ENCODE measurements at regions of chr14 and their contacts with region 1.

Region 1: DNA sequence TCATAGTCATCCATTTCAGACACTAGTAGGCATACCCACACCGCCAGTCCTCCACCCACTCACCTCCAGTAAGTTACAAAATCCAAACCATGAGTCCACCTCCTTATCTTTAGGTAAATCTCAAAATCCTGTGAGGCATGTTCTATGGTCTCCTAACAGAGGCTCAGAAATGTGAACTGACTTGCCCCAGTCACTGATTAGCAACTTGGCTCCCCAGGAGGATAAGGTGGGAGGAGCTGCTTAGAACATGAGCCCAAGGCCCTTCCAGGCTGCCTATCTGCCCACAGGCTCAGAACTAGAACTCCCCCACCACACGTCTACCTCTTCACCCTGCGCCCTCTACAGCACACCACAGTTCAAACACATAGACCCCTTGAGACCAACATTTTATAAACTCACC is 19.9 kb downstream of the SETD3 start:
- DNase-seq: peak in 1 of 2 experiments; percentile 45
- H3K4me3 ChIP-seq: no peak overlapping the region
- H3K27ac ChIP-seq: 0 out of 2 replicates have a peak overlapping the region, but pooled peaks have one; percentile 12
- H3K4me1 ChIP-seq: peaks cover 0 to 18% (median 12%) of the 10 kb centered on the region in 4 experiments; a peak in 5 of 7 replicates
- H3K27me3 ChIP-seq: no peaks in the 10 kb centered on the region
- CTCF ChIP-seq: peak in 2 of 3 experiments; percentile 17 to 43; a peak in 1 of 4 replicates
- EP300 ChIP-seq: no peak
- POLR2A ChIP-seq: no peak
- RAD21 ChIP-seq: peak in 1 of 2 experiments; percentile 20; a peak in 1 of 4 replicates

Region 2: GRCh38 chr14:99450266-99450665 is 10.5 kb before region 1 on chr14:
- CTCF ChIA-PET with region 1: interaction called, 11 read pairs
- POLR2A ChIA-PET with region 1: no interaction called
- DNase-seq: no peak
- H3K4me3 ChIP-seq: no peak overlapping the region
- H3K27ac ChIP-seq: no peak overlapping the region
- H3K4me1 ChIP-seq: no peaks in the 10 kb centered on the region
- H3K27me3 ChIP-seq: no peaks in the 10 kb centered on the region
- CTCF ChIP-seq: no peak
- EP300 ChIP-seq: no peak
- POLR2A ChIP-seq: no peak
- RAD21 ChIP-seq: no peak

Region 3: DNA sequence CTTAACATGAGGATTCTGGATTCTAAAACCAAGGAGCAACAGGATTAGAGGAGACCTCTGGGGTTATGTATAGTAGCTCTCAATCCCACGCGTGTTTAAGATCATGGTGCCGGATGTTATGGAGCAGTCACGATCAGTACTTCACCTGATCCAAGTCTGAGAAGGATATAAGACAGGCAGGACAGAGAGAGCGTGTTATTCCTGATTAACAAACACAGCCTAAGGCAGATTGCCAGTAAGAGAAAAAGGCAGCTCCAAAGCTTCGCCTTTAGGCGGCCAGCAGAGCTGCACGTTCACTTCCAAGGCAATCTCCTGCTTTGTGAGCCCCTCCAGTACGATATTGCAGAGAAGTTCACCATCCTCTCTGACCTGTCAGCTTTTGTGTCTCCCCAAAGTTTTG is 14.4 kb after region 1 on chr14:
- CTCF ChIA-PET with region 1: interaction called, 19 read pairs
- POLR2A ChIA-PET with region 1: no interaction called
- DNase-seq: no peak
- H3K4me3 ChIP-seq: no peak overlapping the region
- H3K27ac ChIP-seq: no peak overlapping the region
- H3K4me1 ChIP-seq: peaks cover 0 to 10% (median 2%) of the 10 kb centered on the region in 4 experiments; a peak in 4 of 7 replicates
- H3K27me3 ChIP-seq: no peaks in the 10 kb centered on the region
- CTCF ChIP-seq: no peak
- EP300 ChIP-seq: no peak
- POLR2A ChIP-seq: no peak
- RAD21 ChIP-seq: no peak

Region 4: DNA sequence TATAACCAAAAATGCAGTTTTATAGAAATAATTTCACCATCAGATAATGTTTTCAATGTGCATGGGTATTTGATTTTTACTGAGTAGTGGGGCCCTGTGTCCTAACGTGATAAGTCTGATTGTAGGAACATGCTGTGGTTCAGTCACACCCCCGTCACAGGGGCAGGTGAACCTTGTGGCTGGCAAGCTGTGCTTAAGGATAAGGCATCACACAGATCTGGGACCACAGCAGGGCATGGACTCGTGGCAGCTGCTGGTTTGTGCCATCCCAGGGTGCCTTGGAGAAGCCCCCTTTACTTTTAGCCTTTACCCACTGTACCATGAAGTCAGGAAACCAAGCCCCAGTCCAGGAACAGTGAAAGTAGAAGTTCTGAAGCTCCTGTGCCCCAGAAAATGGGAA is 37.1 kb after region 1 on chr14:
- CTCF ChIA-PET with region 1: no interaction called
- POLR2A ChIA-PET with region 1: no interaction called
- DNase-seq: no peak
- H3K4me3 ChIP-seq: no peak overlapping the region
- H3K27ac ChIP-seq: no peak overlapping the region
- H3K4me1 ChIP-seq: peaks cover 0 to 6% (median 2%) of the 10 kb centered on the region in 4 experiments; a peak in 4 of 7 replicates
- H3K27me3 ChIP-seq: no peaks in the 10 kb centered on the region
- CTCF ChIP-seq: no peak
- EP300 ChIP-seq: no peak
- POLR2A ChIP-seq: no peak
- RAD21 ChIP-seq: no peak